HEK293T (cell line): ENCODE measurements at regions of chr7 and their contacts with region 1.

Region 1: GRCh38 chr7:108525985-108526767 is at the start of gene PNPLA8:
- DNase-seq: peak; percentile 94

Region 2: GRCh38 chr7:108541478-108541877 is 15.3 kb after region 1 on chr7:
- CTCF ChIA-PET with region 1: no interaction called
- POLR2A ChIA-PET with region 1: interaction called, 11 read pairs
- DNase-seq: no peak

Region 3: GRCh38 chr7:108561047-108561619 is 35.0 kb after region 1 on chr7:
- CTCF ChIA-PET with region 1: no interaction called
- POLR2A ChIA-PET with region 1: interaction called, 11 read pairs
- DNase-seq: no peak

Region 4: DNA sequence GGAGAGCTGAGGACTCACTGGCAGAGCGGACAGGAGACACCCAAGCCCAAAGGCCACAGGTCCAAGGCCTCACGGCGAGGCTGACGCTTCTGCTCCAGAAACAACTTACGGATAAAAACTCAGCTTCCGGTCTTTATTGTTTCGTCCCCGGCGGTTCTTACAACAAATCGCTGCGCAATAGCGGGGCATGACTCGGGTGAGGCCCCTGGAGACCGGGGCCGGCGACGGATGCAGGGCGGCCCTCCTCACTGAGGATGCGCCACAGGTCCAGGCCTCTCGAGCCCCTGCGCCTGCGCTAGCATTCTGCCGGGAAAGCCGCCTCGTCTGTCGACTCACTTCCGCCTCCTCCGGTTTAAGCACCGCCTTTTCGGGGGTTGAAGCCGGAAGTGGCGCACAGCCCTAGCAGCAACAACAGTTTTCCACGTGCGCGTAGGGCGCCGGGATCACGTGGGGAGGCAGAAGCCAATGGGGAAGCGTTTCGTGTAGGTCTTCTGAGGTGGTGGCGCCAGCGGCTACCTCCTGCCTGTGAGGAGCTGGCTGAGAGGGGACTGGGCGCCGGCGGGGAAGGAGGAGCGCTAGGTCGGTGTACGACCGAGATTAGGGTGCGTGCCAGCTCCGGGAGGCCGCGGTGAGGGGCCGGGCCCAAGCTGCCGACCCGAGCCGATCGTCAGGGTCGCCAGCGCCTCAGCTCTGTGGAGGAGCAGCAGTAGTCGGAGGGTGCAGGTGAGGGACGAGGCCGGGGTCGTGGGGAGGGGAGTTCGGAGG is 43.4 kb after region 1 on chr7 and contains the starts of genes DNAJB9 and THAP5:
- CTCF ChIA-PET with region 1: no interaction called
- POLR2A ChIA-PET with region 1: interaction called, 29 read pairs
- DNase-seq: peak; percentile 94